ENCODE measurements at regions of chr14 and their contacts with region 1.

Region 1: GRCh38 chr14:24108336-24108874 is 6.2 kb upstream of the DCAF11 start:
- DNase-seq: no peak
- H3K4me3 ChIP-seq: peak overlapping the region in 1 of 2 experiments; percentile 24; a peak in 1 of 4 replicates
- H3K27ac ChIP-seq: no peak overlapping the region
- H3K4me1 ChIP-seq: peaks cover 0 to 2% of the 10 kb centered on the region in 2 experiments; a peak in 1 of 4 replicates
- H3K27me3 ChIP-seq: no peaks in the 10 kb centered on the region
- CTCF ChIP-seq: no peak
- EP300 ChIP-seq: no peak
- RAD21 ChIP-seq: no peak

Region 2: GRCh38 chr14:23469127-23469905 is 639.1 kb before region 1 on chr14 and contains the start of gene NGDN:
- CTCF ChIA-PET with region 1: no interaction called
- POLR2A ChIA-PET with region 1: no interaction called
- DNase-seq: peak; percentile 86
- H3K4me3 ChIP-seq: peak within 1 kb of the TSS; percentile 92 to 96
- H3K27ac ChIP-seq: peak within 1 kb of the TSS; percentile 61 to 88
- H3K4me1 ChIP-seq: peaks cover 0 to 7% of the 10 kb centered on the region in 2 experiments; a peak in 2 of 4 replicates
- H3K27me3 ChIP-seq: no peaks in the 10 kb centered on the region
- CTCF ChIP-seq: peak; percentile 78
- EP300 ChIP-seq: no peak
- RAD21 ChIP-seq: peak; percentile 69
- polyA plus RNA-seq, gene NGDN: 64.3 and 85.9 TPM in 2 replicates

Region 3: GRCh38 chr14:24130380-24130716 is 21.9 kb after region 1 on chr14 and contains the start of gene FITM1:
- CTCF ChIA-PET with region 1: interaction called, 22 read pairs
- POLR2A ChIA-PET with region 1: interaction called, 21 read pairs
- DNase-seq: no peak
- H3K4me3 ChIP-seq: no peak within 1 kb of the TSS
- H3K27ac ChIP-seq: no peak within 1 kb of the TSS; a peak in 1 of 4 replicates
- H3K4me1 ChIP-seq: peaks cover 0 to 10% of the 10 kb centered on the region in 2 experiments; a peak in 1 of 4 replicates
- H3K27me3 ChIP-seq: no peaks in the 10 kb centered on the region
- CTCF ChIP-seq: no peak
- EP300 ChIP-seq: no peak
- RAD21 ChIP-seq: no peak
- polyA plus RNA-seq, gene FITM1: 0.12 TPM in 1 of 2 replicates, not detected in the other

Measured in SK-N-SH (cell line).